ENCODE measurements at regions of chr16 and their contacts with region 1.

Region 1: GRCh38 chr16:69123910-69124309 is 8.5 kb downstream of the CHTF8 start:
- DNase-seq: no peak
- H3K4me3 ChIP-seq: no peak overlapping the region
- H3K27ac ChIP-seq: no peak overlapping the region
- H3K4me1 ChIP-seq: peaks cover 0 to 36% (median 17%) of the 10 kb centered on the region in 4 donors
- H3K27me3 ChIP-seq: no peaks in the 10 kb centered on the region
- CTCF ChIP-seq: peak; percentile 63 to 70 (median 69)
- EP300 ChIP-seq: no peak
- POLR2A ChIP-seq: no peak

Region 2: DNA sequence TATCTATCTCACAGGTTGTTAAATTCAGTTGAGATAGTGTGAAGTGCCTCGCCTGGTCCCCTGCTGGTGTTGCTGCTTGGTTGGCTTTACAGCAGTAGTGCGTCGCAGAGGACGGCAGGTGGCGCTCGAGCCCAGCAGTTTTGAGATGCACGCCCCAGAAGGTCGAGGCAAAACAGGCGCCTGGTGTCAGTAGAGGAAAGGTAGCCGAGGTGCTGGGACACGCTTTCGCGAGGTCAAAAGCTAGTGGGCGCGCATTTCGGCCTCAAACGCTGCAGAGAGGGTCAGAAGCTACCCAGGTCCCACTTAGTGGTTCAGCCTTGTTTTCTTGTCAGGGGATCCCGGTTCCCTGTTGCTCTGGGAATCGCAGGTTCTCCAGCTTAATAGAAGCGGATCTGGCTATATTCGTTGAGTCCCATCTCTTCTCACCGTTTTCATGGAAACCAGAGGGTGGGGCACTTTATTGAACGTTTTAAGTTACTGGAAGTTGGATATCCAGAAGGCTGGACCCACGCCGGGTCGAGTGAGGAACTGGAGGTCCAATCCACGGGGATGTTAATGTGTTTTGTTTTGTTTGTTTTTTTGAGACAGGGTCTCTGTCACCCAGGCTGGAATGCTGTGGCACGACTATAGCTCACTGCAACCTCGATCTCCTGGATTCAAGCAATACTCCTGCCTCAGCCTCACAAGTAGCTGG is 595.1 kb before region 1 on chr16:
- intact Hi-C with region 1: loop called (anchors 2 kb)
- DNase-seq: peak; percentile 96
- H3K4me3 ChIP-seq: peak overlapping the region in 3 of 4 donors; percentile 11 to 66 (median 45)
- H3K27ac ChIP-seq: no peak overlapping the region
- H3K4me1 ChIP-seq: peaks cover 12 to 26% (median 21%) of the 10 kb centered on the region in 4 donors
- H3K27me3 ChIP-seq: peaks cover 0 to 16% (median 0%) of the 10 kb centered on the region in 4 donors
- CTCF ChIP-seq: peak; percentile 92 to 96 (median 95)
- EP300 ChIP-seq: no peak
- POLR2A ChIP-seq: no peak

Region 3: GRCh38 chr16:68790130-68790761 is 333.7 kb before region 1 on chr16:
- intact Hi-C with region 1: no loop called
- DNase-seq: no peak
- H3K4me3 ChIP-seq: no peak overlapping the region
- H3K27ac ChIP-seq: no peak overlapping the region
- H3K4me1 ChIP-seq: peaks cover 0 to 12% (median 0%) of the 10 kb centered on the region in 4 donors
- H3K27me3 ChIP-seq: no peaks in the 10 kb centered on the region
- CTCF ChIP-seq: no peak
- EP300 ChIP-seq: no peak
- POLR2A ChIP-seq: no peak

Region 4: GRCh38 chr16:68848786-68849185 is 275.1 kb before region 1 on chr16:
- intact Hi-C with region 1: loop called (anchors 5 kb)
- DNase-seq: no peak
- H3K4me3 ChIP-seq: no peak overlapping the region
- H3K27ac ChIP-seq: no peak overlapping the region
- H3K4me1 ChIP-seq: peaks cover 0 to 16% (median 15%) of the 10 kb centered on the region in 4 donors
- H3K27me3 ChIP-seq: no peaks in the 10 kb centered on the region
- CTCF ChIP-seq: no peak
- EP300 ChIP-seq: no peak
- POLR2A ChIP-seq: no peak

Region 5: DNA sequence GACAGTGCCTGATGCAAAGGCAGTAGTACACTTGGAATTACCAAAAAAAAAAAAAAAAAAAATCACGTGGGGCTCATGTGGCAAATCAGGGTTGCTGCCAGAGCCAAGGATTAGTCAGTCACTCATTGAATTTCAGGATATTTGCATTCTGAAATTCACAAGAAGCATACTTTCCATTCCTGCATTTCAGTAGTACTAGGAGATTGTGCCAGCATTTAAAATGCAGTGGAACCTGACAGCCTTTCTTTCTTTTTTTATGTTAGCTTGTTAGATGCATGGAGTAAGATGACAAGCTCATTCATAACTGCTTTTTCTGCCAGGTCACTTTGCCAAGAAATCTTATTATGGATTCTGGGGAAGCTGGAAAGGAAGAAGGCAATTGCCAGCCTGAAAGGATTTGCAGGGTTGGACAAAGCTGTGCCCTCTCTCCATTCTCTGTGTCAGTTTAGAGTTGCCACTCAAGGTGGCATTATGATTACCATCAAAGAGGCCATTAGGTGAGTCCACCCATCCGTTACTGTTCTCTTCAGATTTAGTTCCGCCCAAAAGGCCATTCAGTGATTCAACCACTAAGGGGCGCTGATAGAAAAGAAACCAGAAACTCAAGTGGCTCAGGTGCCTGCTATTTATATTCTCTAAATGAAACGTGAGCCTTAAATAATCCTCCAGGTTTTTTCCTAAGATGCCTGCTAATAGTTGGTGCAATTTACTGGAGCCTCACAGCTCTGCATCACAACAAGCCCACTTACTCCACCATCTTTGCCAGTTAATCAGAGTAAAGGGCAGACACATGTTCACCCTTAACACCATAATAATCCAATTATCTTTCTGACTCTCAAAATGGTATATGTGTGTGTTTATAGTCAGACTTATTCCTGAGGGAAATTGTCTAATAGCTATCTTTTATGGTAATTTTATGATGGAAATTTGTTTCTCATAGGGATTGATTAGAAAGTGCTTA is 221.6 kb before region 1 on chr16:
- intact Hi-C with region 1: loop called (anchors 2 kb)
- DNase-seq: no peak
- H3K4me3 ChIP-seq: no peak overlapping the region
- H3K27ac ChIP-seq: peak overlapping the region in 3 of 4 donors; percentile 35 to 60 (median 56)
- H3K4me1 ChIP-seq: peaks cover 0 to 21% (median 16%) of the 10 kb centered on the region in 4 donors
- H3K27me3 ChIP-seq: no peaks in the 10 kb centered on the region
- CTCF ChIP-seq: peak; percentile 64 to 67 (median 67)
- EP300 ChIP-seq: no peak
- POLR2A ChIP-seq: no peak